K562 (cell line): ENCODE measurements at regions of chr14 and their contacts with region 1.

Region 1: GRCh38 chr14:20970983-20971704 is 15.9 kb downstream of the RNASE2 start:
- DNase-seq: peak; percentile 80 to 85 (median 84)
- ATAC-seq: peak; percentile 97
- H3K4me3 ChIP-seq: peak overlapping the region; percentile 48
- H3K27ac ChIP-seq: no peak overlapping the region
- H3K4me1 ChIP-seq: peaks cover 0 to 10% of the 10 kb centered on the region in 2 experiments; a peak in 3 of 5 replicates
- H3K27me3 ChIP-seq: no peaks in the 10 kb centered on the region; a peak in 2 of 5 replicates
- CTCF ChIP-seq: peak; percentile 90 to 94 (median 91)
- EP300 ChIP-seq: no peak
- POLR2A ChIP-seq: no peak
- RAD21 ChIP-seq: peak; percentile 56 to 65

Region 2: DNA sequence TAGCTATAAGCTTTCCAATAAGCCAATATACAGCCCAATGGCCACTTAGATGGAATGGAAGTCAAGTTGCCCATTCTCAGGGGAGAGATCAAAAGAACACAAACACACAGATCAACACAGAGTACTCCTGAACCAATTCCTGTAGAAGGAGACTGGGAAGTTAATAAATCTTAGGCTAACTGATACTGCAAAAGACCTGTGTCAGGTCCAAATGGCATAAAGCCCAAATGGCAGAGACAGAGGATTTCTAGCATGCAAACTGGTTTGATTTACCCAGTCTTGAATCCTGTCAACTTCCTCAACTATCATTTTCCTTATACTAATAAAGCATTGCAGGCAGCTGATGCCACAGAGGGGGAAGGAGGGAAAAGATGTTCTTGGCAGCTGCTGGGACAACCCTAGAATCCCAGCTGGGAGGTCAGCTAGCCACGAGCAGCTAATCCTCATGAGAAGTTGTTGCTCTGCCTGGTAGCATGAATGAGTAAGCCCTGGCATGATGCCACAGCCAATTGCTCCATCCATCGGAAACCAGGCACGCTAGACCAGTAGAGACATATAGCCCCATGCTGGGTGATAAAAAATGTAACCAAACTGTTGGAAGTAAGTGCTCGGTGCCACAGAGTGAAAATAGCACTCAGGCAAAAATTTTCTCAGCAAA is 256.4 kb before region 1 on chr14:
- CTCF ChIA-PET with region 1: no interaction called
- POLR2A ChIA-PET with region 1: no interaction called
- in situ Hi-C with region 1: loop called (anchors 25 kb)
- intact Hi-C with region 1: no loop called
- DNase-seq: no peak
- ATAC-seq: no peak
- H3K4me3 ChIP-seq: no peak overlapping the region
- H3K27ac ChIP-seq: no peak overlapping the region
- H3K4me1 ChIP-seq: peaks cover 0 to 2% of the 10 kb centered on the region in 2 experiments; a peak in 3 of 5 replicates
- H3K27me3 ChIP-seq: no peaks in the 10 kb centered on the region
- CTCF ChIP-seq: no peak
- EP300 ChIP-seq: no peak
- POLR2A ChIP-seq: no peak
- RAD21 ChIP-seq: no peak

Region 3: GRCh38 chr14:21003788-21004346 is 32.7 kb after region 1 on chr14:
- CTCF ChIA-PET with region 1: no interaction called
- POLR2A ChIA-PET with region 1: no interaction called
- in situ Hi-C with region 1: no loop called
- intact Hi-C with region 1: no loop called
- DNase-seq: no peak
- ATAC-seq: no peak
- H3K4me3 ChIP-seq: no peak overlapping the region
- H3K27ac ChIP-seq: no peak overlapping the region
- H3K4me1 ChIP-seq: peaks cover 5 to 17% of the 10 kb centered on the region in 2 experiments; a peak in 3 of 5 replicates
- H3K27me3 ChIP-seq: no peaks in the 10 kb centered on the region
- CTCF ChIP-seq: no peak
- EP300 ChIP-seq: no peak
- POLR2A ChIP-seq: no peak
- RAD21 ChIP-seq: no peak

Region 4: DNA sequence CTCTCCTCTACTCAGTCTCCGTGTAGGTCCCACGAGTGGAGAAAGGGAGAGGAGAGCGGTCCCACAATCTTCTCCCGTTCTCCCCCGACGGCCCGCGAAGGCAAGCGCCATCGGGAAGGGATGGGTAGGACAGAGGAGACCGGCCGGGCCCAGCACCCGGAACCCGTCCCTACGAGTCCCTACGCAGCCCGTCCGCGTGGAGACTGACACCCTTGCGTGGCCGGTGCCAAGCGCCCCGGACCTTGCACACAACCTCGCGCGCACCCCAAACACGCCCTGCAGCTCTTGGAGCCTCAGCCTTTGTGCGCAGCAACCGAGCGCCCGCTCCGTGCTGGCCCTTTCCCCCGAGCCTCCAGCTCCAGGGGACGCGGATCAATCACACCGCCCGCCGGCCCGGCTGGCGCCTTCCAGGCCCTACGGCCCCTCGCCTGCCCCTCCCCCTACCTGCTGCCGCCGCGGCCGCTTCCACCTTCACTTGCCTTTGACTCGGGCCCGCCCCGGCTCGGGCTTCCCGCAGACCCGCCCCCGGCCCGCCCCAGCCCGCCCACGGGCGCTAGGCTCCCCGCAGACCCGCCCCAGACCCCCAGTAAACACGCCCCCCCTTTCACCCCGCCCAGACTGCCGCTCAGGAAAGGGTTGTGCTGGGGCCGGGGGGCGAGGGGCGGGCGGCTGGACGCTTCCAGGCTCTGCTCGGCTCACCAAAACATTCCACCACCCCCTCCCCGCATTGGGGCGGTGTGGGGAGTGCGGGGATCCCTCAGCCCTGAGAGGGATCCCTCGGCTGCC is 53.6 kb after region 1 on chr14 and contains the start of gene NDRG2:
- CTCF ChIA-PET with region 1: no interaction called
- POLR2A ChIA-PET with region 1: no interaction called
- in situ Hi-C with region 1: no loop called
- intact Hi-C with region 1: no loop called
- DNase-seq: peak; percentile 85 to 92 (median 91)
- ATAC-seq: peak; percentile 90
- H3K4me3 ChIP-seq: peak within 1 kb of the TSS; percentile 66
- H3K27ac ChIP-seq: peak within 1 kb of the TSS; percentile 80
- H3K4me1 ChIP-seq: peaks cover 35 to 39% of the 10 kb centered on the region in 2 experiments
- H3K27me3 ChIP-seq: no peaks in the 10 kb centered on the region
- CTCF ChIP-seq: no peak
- EP300 ChIP-seq: no peak
- POLR2A ChIP-seq: peak; percentile 65
- RAD21 ChIP-seq: no peak
- polyA plus RNA-seq, gene NDRG2: 10.1 to 22.9 TPM

Region 5: DNA sequence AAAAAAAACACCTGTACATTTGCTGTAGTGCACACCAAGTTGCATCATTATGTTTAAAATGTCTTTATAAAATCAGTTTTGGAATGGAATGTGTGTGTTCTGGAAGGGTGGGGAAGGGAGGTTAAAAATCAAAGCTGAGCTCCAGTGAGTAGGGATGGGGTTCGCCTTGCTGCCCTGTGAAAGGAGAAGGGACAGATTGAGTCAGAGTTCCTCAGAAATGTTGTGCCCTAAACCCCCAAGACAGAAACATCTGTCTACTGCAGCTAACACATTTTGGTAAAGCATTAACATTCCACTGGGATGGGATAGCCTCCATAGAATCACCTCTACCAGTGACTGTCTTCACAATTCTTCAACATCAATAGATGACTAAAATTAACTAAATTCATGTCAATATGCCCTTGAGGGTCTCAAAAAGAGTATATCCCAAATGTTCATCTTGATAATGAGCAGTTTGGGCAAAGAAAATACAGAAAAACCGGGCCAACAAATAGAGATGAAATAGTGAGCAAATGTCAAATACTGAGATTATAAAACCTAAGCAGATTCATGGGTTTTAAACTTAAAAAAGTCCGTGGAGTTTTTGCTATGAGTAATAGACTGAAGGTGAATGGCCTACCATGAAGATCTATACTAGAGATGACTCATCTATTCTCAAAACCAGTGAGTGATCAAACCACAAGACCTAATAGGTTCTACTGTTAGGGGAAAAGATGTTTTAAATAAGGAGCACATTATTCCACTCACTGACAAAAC is 292.7 kb after region 1 on chr14:
- CTCF ChIA-PET with region 1: no interaction called
- POLR2A ChIA-PET with region 1: no interaction called
- in situ Hi-C with region 1: no loop called
- intact Hi-C with region 1: no loop called
- DNase-seq: peak in 1 of 4 experiments; percentile 12
- ATAC-seq: peak; percentile 23; the same call in 2 of the 3 replicates
- H3K4me3 ChIP-seq: peak overlapping the region; percentile 2; the same call in 1 of the 2 replicates
- H3K27ac ChIP-seq: peak overlapping the region; percentile 53
- H3K4me1 ChIP-seq: peaks cover 17 to 25% of the 10 kb centered on the region in 2 experiments
- H3K27me3 ChIP-seq: no peaks in the 10 kb centered on the region
- CTCF ChIP-seq: no peak
- EP300 ChIP-seq: no peak
- POLR2A ChIP-seq: peak; percentile 35; the same call in 1 of the 2 replicates
- RAD21 ChIP-seq: no peak

Region 6: GRCh38 chr14:21367582-21368144 is 396.5 kb after region 1 on chr14:
- CTCF ChIA-PET with region 1: no interaction called
- POLR2A ChIA-PET with region 1: no interaction called
- in situ Hi-C with region 1: no loop called
- intact Hi-C with region 1: no loop called
- DNase-seq: no peak
- ATAC-seq: no peak
- H3K4me3 ChIP-seq: no peak overlapping the region
- H3K27ac ChIP-seq: no peak overlapping the region
- H3K4me1 ChIP-seq: no peaks in the 10 kb centered on the region
- H3K27me3 ChIP-seq: no peaks in the 10 kb centered on the region
- CTCF ChIP-seq: no peak
- EP300 ChIP-seq: no peak
- POLR2A ChIP-seq: no peak
- RAD21 ChIP-seq: no peak